ENCODE measurements at regions of chr6 and their contacts with region 1.

Region 1: GRCh38 chr6:87929843-87930288 is 117.8 kb upstream of the SPACA1 start:
- DNase-seq: peak; percentile 41 to 52 (median 44)
- H3K4me3 ChIP-seq: no peak overlapping the region
- H3K4me3 Mint-ChIP-seq: peak overlapping the region in 1 of 8 donors; percentile 14
- H3K27ac ChIP-seq: no peak overlapping the region
- H3K27ac Mint-ChIP-seq: no peak overlapping the region
- H3K4me1 ChIP-seq: no peaks in the 10 kb centered on the region
- H3K4me1 Mint-ChIP-seq: peaks cover 0 to 7% (median 2%) of the 10 kb centered on the region in 4 donors
- H3K27me3 ChIP-seq: no peaks in the 10 kb centered on the region
- H3K27me3 Mint-ChIP-seq: peaks cover 0 to 2% of the 10 kb centered on the region in 2 donors

Region 2: DNA sequence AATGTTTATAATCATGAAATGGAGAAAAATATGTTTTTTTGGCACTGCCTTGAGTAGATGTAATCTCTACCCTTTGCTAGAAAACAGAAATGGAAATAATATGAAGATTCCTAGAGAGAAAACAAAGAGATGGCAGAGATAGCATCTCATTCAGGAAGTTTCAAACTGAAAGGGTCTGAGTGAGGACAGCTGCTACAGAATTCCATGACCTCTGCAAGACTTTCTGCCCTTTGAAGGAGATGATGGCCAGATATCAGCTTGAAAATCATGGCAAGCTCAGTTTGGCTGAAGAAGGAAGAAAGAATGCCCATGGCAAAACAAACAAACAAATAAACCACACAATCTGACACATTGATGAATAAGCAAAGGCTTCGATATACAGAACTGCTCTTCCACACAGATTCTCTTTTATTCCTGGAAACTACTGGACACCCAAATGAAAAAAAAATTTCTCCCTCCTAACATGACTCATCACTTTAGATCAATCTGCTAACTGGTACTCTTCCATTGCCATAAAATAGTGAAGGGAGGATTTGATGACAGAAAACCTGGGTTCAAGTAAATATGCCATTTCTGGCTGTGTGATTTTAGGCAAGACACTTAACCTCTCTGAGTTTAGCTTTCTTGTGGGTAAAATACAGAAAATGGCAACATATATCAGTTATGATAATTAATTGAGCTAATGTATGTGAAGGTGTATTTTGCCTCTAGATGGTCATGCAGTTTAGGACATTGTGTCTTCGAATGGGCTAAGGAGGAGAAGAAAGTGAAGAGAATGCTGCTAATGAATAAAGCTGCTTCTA is 11.9 kb after region 1 on chr6:
- CTCF ChIA-PET with region 1: interaction called, 19 read pairs
- POLR2A ChIA-PET with region 1: no interaction called
- intact Hi-C with region 1: no loop called
- DNase-seq: no peak
- H3K4me3 ChIP-seq: no peak overlapping the region
- H3K4me3 Mint-ChIP-seq: no peak overlapping the region
- H3K27ac ChIP-seq: no peak overlapping the region
- H3K27ac Mint-ChIP-seq: no peak overlapping the region
- H3K4me1 ChIP-seq: no peaks in the 10 kb centered on the region
- H3K4me1 Mint-ChIP-seq: no peaks in the 10 kb centered on the region
- H3K27me3 ChIP-seq: no peaks in the 10 kb centered on the region
- H3K27me3 Mint-ChIP-seq: peaks cover 11 to 22% of the 10 kb centered on the region in 2 donors

Region 3: DNA sequence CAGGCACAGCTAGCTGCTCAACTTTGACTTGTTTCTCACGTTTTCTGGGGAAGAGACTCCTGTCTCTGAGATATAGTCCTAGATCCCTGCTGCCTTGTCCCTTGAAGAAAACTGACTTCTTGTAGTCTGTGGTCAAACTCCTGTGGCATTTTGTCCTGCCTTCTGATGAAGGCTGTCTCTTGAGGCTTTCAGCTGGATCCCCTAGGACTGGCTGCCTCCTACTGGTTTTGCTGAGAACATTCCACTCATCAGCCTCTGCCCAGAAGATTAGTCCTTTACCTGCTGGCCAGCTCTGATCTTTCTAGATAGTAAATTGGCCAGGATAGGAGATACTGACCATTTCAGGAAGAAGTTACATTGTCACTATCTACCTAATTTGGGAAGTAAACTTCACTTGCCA is 308.2 kb after region 1 on chr6:
- CTCF ChIA-PET with region 1: no interaction called
- POLR2A ChIA-PET with region 1: no interaction called
- intact Hi-C with region 1: loop called (anchors 2 kb)
- DNase-seq: peak in 2 of 5 donors; percentile 1 to 9
- H3K4me3 ChIP-seq: no peak overlapping the region
- H3K4me3 Mint-ChIP-seq: no peak overlapping the region
- H3K27ac ChIP-seq: no peak overlapping the region
- H3K27ac Mint-ChIP-seq: no peak overlapping the region
- H3K4me1 ChIP-seq: no peaks in the 10 kb centered on the region
- H3K4me1 Mint-ChIP-seq: no peaks in the 10 kb centered on the region
- H3K27me3 ChIP-seq: no peaks in the 10 kb centered on the region
- H3K27me3 Mint-ChIP-seq: no peaks in the 10 kb centered on the region